ENCODE measurements at regions of chr22 and their contacts with region 1.

Region 1: DNA sequence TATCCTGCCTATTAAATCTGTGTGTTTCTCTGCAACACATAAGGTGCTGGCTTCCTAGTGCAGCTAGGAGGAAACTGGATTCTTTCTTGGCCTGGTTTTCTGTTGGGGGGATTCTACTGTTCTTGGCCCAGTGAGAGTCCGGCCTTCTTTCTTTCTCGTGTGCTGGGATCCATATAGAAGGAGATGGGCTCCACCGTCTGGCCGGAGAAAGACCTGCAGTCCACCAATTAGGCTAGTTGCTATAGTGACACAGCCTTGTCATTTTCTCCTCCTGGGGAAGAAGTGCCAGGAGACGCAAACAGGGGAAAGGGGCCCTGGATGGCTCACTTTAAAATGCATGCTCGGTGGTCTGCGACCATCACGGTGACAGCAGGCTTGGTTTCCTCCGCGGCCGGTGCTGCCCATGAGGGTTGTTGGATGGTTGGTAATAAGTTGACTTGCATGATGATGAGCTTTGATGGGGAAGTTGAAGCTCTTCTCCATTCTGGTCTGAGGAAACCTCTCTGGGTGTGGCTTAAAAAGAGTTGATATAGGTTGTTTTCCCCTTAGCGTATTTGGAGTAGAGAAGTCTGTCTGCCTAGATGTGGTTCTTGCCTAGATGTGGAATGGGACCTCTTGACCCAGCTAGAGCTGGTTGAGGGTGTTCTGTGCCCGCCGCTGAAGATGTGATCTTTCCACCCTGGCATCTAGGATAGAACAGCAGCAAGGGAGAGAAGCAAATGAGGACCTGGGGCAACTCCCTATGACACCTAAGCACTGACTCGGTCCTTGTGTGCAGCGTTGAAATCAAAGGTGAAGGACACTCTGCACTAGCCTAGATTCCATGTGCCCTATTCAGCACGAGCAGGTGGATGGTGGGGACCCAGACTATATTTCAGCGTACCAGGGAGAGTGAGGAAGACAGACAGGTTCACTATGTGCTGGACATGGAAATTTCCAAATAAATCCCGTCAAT is 1335.0 kb downstream of the BRD1 start:
- DNase-seq: peak; percentile 70
- ATAC-seq: peak; percentile 43
- H3K4me3 ChIP-seq: no peak overlapping the region
- H3K4me3 Mint-ChIP-seq: no peak overlapping the region
- H3K27ac ChIP-seq: no peak overlapping the region
- H3K27ac Mint-ChIP-seq: no peak overlapping the region
- H3K4me1 ChIP-seq: peaks cover 8 to 23% of the 10 kb centered on the region in 2 donors
- H3K4me1 Mint-ChIP-seq: peaks cover 14% of the 10 kb centered on the region
- H3K27me3 ChIP-seq: peaks cover 0 to 30% (median 17%) of the 10 kb centered on the region in 4 experiments
- H3K27me3 Mint-ChIP-seq: peaks cover 42% of the 10 kb centered on the region
- CTCF ChIP-seq: peak; percentile 83

Region 2: GRCh38 chr22:47213571-47214230 is 1278.9 kb before region 1 on chr22:
- CTCF ChIA-PET with region 1: interaction called, 35 read pairs
- POLR2A ChIA-PET with region 1: no interaction called
- intact Hi-C with region 1: no loop called
- DNase-seq: peak; percentile 54
- ATAC-seq: peak; percentile 45
- H3K4me3 ChIP-seq: no peak overlapping the region
- H3K4me3 Mint-ChIP-seq: no peak overlapping the region
- H3K27ac ChIP-seq: no peak overlapping the region
- H3K27ac Mint-ChIP-seq: peak overlapping the region; percentile 50
- H3K4me1 ChIP-seq: no peaks in the 10 kb centered on the region
- H3K4me1 Mint-ChIP-seq: no peaks in the 10 kb centered on the region
- H3K27me3 ChIP-seq: no peaks in the 10 kb centered on the region
- H3K27me3 Mint-ChIP-seq: peaks cover 2% of the 10 kb centered on the region
- CTCF ChIP-seq: peak; percentile 87

Region 3: DNA sequence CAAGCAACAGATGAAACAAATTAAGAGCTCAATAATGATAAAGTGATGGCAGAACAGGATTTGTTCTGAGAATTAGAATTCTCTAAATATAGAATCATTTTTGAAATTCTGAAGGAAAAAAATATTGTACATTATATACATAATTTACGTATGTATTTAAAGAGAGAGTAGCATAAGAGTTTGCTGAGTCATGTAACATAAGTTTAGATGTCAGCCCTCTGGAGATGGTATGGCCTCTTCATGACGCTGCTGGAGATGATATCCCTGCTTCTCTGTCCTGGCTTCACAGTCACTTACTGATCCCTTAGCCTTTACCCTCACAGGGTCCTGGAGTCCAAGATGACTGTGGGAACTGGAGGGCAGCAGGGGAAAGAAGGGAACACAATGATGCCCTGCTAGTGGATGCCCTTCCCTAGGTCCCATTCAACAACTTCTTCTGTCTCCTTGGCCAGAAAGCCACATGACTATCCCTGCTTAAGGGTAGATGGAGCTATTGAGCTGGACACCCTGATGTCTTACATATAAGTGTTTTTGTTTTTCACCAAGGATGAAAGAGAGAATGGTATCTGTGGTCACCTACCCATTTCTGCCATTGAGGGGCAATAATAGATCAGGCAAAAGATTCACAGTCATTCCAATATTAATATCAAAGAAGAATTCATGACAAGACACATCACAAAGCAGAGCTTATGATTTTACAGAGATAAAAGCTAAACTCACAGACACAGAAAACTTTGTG is 977.1 kb before region 1 on chr22:
- CTCF ChIA-PET with region 1: interaction called, 3 read pairs
- POLR2A ChIA-PET with region 1: no interaction called
- intact Hi-C with region 1: loop called (anchors 5 kb)
- DNase-seq: no peak
- ATAC-seq: no peak
- H3K4me3 ChIP-seq: no peak overlapping the region
- H3K4me3 Mint-ChIP-seq: no peak overlapping the region
- H3K27ac ChIP-seq: no peak overlapping the region
- H3K27ac Mint-ChIP-seq: no peak overlapping the region
- H3K4me1 ChIP-seq: no peaks in the 10 kb centered on the region
- H3K4me1 Mint-ChIP-seq: no peaks in the 10 kb centered on the region
- H3K27me3 ChIP-seq: no peaks in the 10 kb centered on the region
- H3K27me3 Mint-ChIP-seq: no peaks in the 10 kb centered on the region
- CTCF ChIP-seq: no peak

Region 4: GRCh38 chr22:48511211-48511610 is 18.6 kb after region 1 on chr22:
- CTCF ChIA-PET with region 1: no interaction called
- POLR2A ChIA-PET with region 1: no interaction called
- intact Hi-C with region 1: no loop called
- DNase-seq: no peak
- ATAC-seq: no peak
- H3K4me3 ChIP-seq: no peak overlapping the region
- H3K4me3 Mint-ChIP-seq: no peak overlapping the region
- H3K27ac ChIP-seq: no peak overlapping the region
- H3K27ac Mint-ChIP-seq: no peak overlapping the region
- H3K4me1 ChIP-seq: no peaks in the 10 kb centered on the region
- H3K4me1 Mint-ChIP-seq: no peaks in the 10 kb centered on the region
- H3K27me3 ChIP-seq: no peaks in the 10 kb centered on the region
- H3K27me3 Mint-ChIP-seq: no peaks in the 10 kb centered on the region
- CTCF ChIP-seq: no peak

Region 5: GRCh38 chr22:48574776-48575565 is 82.3 kb after region 1 on chr22:
- CTCF ChIA-PET with region 1: no interaction called
- POLR2A ChIA-PET with region 1: no interaction called
- intact Hi-C with region 1: no loop called
- DNase-seq: no peak
- ATAC-seq: no peak
- H3K4me3 ChIP-seq: no peak overlapping the region
- H3K4me3 Mint-ChIP-seq: peak overlapping the region; percentile 20
- H3K27ac ChIP-seq: no peak overlapping the region
- H3K27ac Mint-ChIP-seq: no peak overlapping the region
- H3K4me1 ChIP-seq: no peaks in the 10 kb centered on the region
- H3K4me1 Mint-ChIP-seq: peaks cover 6% of the 10 kb centered on the region
- H3K27me3 ChIP-seq: peaks cover 0 to 28% (median 6%) of the 10 kb centered on the region in 4 experiments
- H3K27me3 Mint-ChIP-seq: peaks cover 37% of the 10 kb centered on the region
- CTCF ChIP-seq: no peak

Measured in B cell (primary cell).